Mammary epithelial cell (primary cell): ENCODE measurements at regions of chr21 and their contacts with region 1.

Region 1: DNA sequence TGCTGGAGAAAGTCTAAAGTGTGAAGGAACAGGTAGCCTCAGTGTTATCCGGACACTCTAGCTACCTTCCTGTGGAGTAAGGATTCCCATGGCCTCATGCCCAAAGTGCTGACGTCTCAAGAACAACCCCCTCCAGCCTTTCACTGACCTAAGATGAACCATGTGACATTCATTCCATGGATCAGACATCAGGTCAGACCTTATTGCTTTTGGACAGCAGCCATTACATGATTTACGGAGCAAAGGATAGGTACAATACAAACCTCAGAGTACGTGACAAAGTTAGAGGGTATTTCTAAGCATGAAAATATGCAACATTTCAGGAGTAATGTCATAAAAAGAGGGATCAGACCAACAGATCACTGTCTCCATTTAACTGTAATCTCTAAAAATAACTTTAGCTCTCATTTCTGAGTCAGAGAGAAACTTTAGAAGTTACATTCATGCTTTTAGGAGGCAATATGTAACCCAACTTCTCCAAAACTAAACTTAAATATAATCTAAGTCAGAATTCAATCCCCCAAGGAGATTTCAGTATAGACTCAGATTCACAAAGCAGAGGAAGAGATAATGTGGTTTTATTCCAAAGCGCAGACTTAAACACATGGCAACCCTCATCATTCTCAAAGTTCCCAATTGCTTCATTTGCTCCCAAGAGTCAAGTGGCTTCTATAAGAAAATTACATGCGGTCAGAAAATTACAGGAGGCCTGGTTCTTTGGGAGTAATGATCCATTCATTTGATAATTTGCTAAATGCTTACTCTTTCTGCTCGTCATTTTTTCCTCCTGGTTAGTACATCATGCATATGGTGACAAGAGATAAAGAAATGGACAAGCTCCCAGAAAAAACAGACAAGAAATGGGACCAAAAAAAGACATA is 280.4 kb downstream of the SETD4 start:
- DNase-seq: peak; percentile 73
- H3K4me3 ChIP-seq: no peak overlapping the region
- H3K27ac ChIP-seq: no peak overlapping the region
- H3K4me1 ChIP-seq: peaks cover 19% of the 10 kb centered on the region
- H3K27me3 ChIP-seq: no peaks in the 10 kb centered on the region
- CTCF ChIP-seq: no peak

Region 2: GRCh38 chr21:35002879-35003722 is 776.8 kb before region 1 on chr21:
- CTCF ChIA-PET with region 1: no interaction called
- dilution Hi-C with region 1: no loop called
- in situ Hi-C with region 1: no loop called
- intact Hi-C with region 1: no loop called
- DNase-seq: peak; percentile 66
- H3K4me3 ChIP-seq: no peak overlapping the region
- H3K27ac ChIP-seq: peak overlapping the region; percentile 9
- H3K4me1 ChIP-seq: peaks cover 2% of the 10 kb centered on the region
- H3K27me3 ChIP-seq: no peaks in the 10 kb centered on the region
- CTCF ChIP-seq: no peak

Region 3: DNA sequence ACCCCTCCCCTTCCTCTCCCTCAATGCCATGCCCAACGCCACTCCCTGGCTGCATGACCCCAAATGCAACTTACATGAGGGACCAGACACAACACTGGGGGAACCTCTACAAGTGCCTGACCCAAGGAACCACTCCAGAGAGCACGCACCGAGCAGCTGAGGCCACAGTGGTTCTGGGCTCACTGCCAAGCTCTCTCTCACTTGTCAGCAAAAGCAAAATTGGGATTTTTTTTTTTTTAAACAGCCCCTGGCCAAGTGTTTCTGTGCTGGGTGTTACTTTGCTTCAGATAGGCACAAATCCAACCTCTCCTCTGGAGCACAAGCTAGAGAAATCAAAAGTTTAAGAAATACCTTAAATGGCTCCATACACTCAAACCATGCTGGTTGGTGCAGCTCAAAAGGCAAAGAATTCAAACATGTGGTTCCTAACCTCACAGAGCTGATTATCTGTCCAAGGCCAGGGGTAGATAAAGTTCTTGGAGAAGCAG is 82.6 kb before region 1 on chr21:
- CTCF ChIA-PET with region 1: no interaction called
- dilution Hi-C with region 1: no loop called
- in situ Hi-C with region 1: no loop called
- intact Hi-C with region 1: no loop called
- DNase-seq: peak; percentile 3
- H3K4me3 ChIP-seq: no peak overlapping the region
- H3K27ac ChIP-seq: no peak overlapping the region
- H3K4me1 ChIP-seq: no peaks in the 10 kb centered on the region
- H3K27me3 ChIP-seq: no peaks in the 10 kb centered on the region
- CTCF ChIP-seq: no peak

Region 4: GRCh38 chr21:35743571-35743970 is 36.4 kb before region 1 on chr21:
- CTCF ChIA-PET with region 1: no interaction called
- dilution Hi-C with region 1: loop called (anchors 5 kb)
- in situ Hi-C with region 1: no loop called
- intact Hi-C with region 1: no loop called
- DNase-seq: peak; percentile 45
- H3K4me3 ChIP-seq: no peak overlapping the region
- H3K27ac ChIP-seq: no peak overlapping the region
- H3K4me1 ChIP-seq: peaks cover 36% of the 10 kb centered on the region
- H3K27me3 ChIP-seq: no peaks in the 10 kb centered on the region
- CTCF ChIP-seq: no peak

Region 5: GRCh38 chr21:35829067-35829466 is 49.1 kb after region 1 on chr21:
- CTCF ChIA-PET with region 1: no interaction called
- dilution Hi-C with region 1: no loop called
- in situ Hi-C with region 1: no loop called
- intact Hi-C with region 1: no loop called
- DNase-seq: no peak
- H3K4me3 ChIP-seq: no peak overlapping the region
- H3K27ac ChIP-seq: no peak overlapping the region
- H3K4me1 ChIP-seq: no peaks in the 10 kb centered on the region
- H3K27me3 ChIP-seq: no peaks in the 10 kb centered on the region
- CTCF ChIP-seq: no peak